Heart right ventricle (tissue), 16 donors: ENCODE measurements at regions of chr5 and their contacts with region 1.

Region 1: GRCh38 chr5:50744776-50745175 is 78.3 kb downstream of the PARP8 start:
- DNase-seq: no peak
- ATAC-seq: peak in 5 of 8 donors; percentile 26 to 69 (median 55)
- H3K4me3 ChIP-seq: peak overlapping the region in 8 of 10 donors; percentile 18 to 43 (median 38)
- H3K27ac ChIP-seq: peak overlapping the region in 8 of 10 donors; percentile 9 to 77 (median 35)
- H3K4me1 ChIP-seq: peaks cover 0 to 42% (median 5%) of the 10 kb centered on the region in 9 donors
- H3K27me3 ChIP-seq: no peaks in the 10 kb centered on the region
- CTCF ChIP-seq: no peak

Region 2: GRCh38 chr5:50583621-50584020 is 161.2 kb before region 1 on chr5:
- intact Hi-C with region 1: no loop called
- DNase-seq: no peak
- ATAC-seq: no peak
- H3K4me3 ChIP-seq: no peak overlapping the region
- H3K27ac ChIP-seq: no peak overlapping the region
- H3K4me1 ChIP-seq: no peaks in the 10 kb centered on the region
- H3K27me3 ChIP-seq: peaks cover 0 to 14% (median 0%) of the 10 kb centered on the region in 7 donors
- CTCF ChIP-seq: no peak

Region 3: GRCh38 chr5:50667653-50668595 is 76.9 kb before region 1 on chr5:
- intact Hi-C with region 1: loop called in 1 of 10 experiments (anchors 10 kb)
- DNase-seq: peak; percentile 68 to 74
- ATAC-seq: peak in 7 of 8 donors; percentile 41 to 69 (median 61)
- H3K4me3 ChIP-seq: peak overlapping the region; percentile 69 to 95 (median 86)
- H3K27ac ChIP-seq: peak overlapping the region; percentile 48 to 96 (median 82)
- H3K4me1 ChIP-seq: peaks cover 0 to 72% (median 11%) of the 10 kb centered on the region in 9 donors
- H3K27me3 ChIP-seq: no peaks in the 10 kb centered on the region
- CTCF ChIP-seq: no peak